ENCODE measurements at regions of chr6 and their contacts with region 1.

Region 1: DNA sequence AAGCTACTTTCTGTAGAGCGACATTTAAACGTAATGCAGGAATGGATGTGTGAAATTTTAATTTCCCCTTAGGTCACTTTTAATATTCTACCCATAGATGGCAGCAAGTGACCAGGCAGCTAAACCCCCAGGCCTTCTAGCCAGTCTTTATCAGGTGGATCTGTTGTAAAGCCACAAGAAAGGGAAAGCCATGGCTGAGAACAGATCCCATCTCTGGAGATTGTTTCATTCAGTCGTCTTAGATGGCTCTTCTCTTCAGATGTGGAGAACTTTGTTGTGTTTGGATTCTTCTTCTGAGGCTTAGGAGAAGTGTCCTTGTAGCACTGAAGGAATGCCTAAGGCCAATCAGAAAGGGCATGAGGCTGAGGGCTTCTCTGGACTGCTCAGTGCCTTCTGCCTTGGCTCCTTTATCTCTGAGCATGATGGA is 15.8 kb upstream of the RNF182 start:
- DNase-seq: peak; percentile 79
- H3K27ac ChIP-seq: no peak overlapping the region
- CTCF ChIP-seq: peak; percentile 85

Region 2: GRCh38 chr6:14066782-14067406 is 157.9 kb after region 1 on chr6:
- CTCF ChIA-PET with region 1: interaction called, 49 read pairs
- POLR2A ChIA-PET with region 1: no interaction called
- DNase-seq: peak; percentile 75
- H3K27ac ChIP-seq: no peak overlapping the region
- CTCF ChIP-seq: peak; percentile 69

Region 3: GRCh38 chr6:14144678-14145113 is 235.7 kb after region 1 on chr6:
- CTCF ChIA-PET with region 1: interaction called, 10 read pairs
- POLR2A ChIA-PET with region 1: no interaction called
- DNase-seq: peak; percentile 82
- H3K27ac ChIP-seq: no peak overlapping the region
- CTCF ChIP-seq: peak; percentile 91

Region 4: GRCh38 chr6:14932485-14933155 is 1023.7 kb after region 1 on chr6:
- CTCF ChIA-PET with region 1: no interaction called
- POLR2A ChIA-PET with region 1: no interaction called
- DNase-seq: no peak
- H3K27ac ChIP-seq: no peak overlapping the region
- CTCF ChIP-seq: no peak